Upper lobe of right lung (tissue), 1 donor: ENCODE measurements at regions of chr4 and their contacts with region 1.

Region 1: GRCh38 chr4:152843481-152844090 is 63.8 kb downstream of the ARFIP1 start:
- DNase-seq: no peak
- ATAC-seq: no peak
- H3K4me3 ChIP-seq: no peak overlapping the region
- H3K27ac ChIP-seq: no peak overlapping the region
- H3K4me1 ChIP-seq: no peaks in the 10 kb centered on the region
- H3K27me3 ChIP-seq: no peaks in the 10 kb centered on the region
- CTCF ChIP-seq: no peak

Region 2: GRCh38 chr4:153083447-153083947 is 239.9 kb after region 1 on chr4:
- intact Hi-C with region 1: loop called (anchors 10 kb)
- DNase-seq: no peak
- ATAC-seq: peak; percentile 82
- H3K4me3 ChIP-seq: no peak overlapping the region
- H3K27ac ChIP-seq: no peak overlapping the region
- H3K4me1 ChIP-seq: peaks cover 5% of the 10 kb centered on the region
- H3K27me3 ChIP-seq: no peaks in the 10 kb centered on the region
- CTCF ChIP-seq: peak; percentile 65